Motor neuron (in vitro differentiated cells): ENCODE measurements at regions of chr4 and their contacts with region 1.

Region 1: DNA sequence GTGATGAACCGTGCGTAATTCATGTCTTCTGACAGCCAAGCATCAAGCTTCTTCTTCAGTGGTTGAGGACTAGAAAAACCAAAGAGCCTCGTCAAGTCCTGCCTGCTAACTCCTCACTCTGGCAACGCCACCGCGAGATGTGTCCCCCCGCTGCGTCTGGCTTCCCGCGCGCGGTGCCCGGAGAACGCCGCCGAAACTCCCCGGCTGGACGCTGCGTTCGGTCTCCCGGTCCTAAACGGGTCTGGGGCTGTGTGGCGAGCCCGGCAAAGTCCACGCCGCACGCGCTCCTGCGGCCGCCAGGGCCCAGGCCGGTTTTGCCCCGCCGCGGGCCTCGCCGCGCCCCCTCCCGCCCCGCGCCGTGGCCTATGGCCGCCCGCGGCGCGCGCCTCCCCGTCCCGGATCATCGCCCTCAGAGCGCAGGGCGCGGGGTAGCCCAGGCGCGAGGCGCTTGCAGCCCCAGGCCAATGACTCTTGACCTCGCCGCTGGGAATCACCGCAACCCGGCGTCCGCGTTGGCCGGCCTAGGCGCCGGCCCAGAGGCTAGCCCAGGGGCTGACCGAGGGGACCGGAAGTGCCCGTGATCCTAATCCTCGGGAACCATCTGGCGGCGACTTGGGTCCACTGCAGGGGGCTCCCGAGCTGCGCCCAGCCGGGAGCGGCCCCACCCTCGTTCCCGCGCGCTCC is at the start of gene AADAT:
- ATAC-seq: peak; percentile 85 to 93 (median 92)
- H3K4me3 ChIP-seq: peak within 1 kb of the TSS; percentile 46 to 82 (median 58)
- H3K27ac ChIP-seq: peak within 1 kb of the TSS; percentile 52 to 78
- H3K4me1 ChIP-seq: peaks cover 10 to 17% of the 10 kb centered on the region in 2 donors
- total RNA-seq, gene AADAT: 4.6 to 25.3 (median 12.1) TPM

Region 2: DNA sequence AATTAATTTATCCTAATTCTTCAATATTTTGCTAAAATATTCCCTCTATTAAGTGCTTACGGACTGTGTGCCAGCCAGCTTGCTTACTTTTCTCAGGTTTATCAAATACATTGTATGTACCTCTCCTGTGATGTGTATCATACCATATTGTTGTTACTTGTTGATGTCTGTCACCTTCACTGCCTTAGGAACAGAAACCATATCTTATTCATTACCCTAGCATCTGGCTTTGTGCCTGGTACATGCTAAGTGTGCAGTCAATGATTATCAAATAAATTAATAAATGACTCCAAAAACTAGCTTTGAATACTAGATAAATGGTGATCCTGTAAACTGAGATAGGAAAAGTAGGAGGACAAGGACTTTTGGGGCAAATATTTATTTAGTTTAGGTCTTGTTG is 462.5 kb before region 1 on chr4:
- in situ Hi-C with region 1: loop called in 1 of 9 experiments (anchors 25 kb)
- ATAC-seq: peak in 1 of 8 experiments; percentile 32
- H3K4me3 ChIP-seq: no peak overlapping the region
- H3K27ac ChIP-seq: no peak overlapping the region
- H3K4me1 ChIP-seq: no peaks in the 10 kb centered on the region